AG04450 (cell line): ENCODE measurements at regions of chr9 and their contacts with region 1.

Region 1: DNA sequence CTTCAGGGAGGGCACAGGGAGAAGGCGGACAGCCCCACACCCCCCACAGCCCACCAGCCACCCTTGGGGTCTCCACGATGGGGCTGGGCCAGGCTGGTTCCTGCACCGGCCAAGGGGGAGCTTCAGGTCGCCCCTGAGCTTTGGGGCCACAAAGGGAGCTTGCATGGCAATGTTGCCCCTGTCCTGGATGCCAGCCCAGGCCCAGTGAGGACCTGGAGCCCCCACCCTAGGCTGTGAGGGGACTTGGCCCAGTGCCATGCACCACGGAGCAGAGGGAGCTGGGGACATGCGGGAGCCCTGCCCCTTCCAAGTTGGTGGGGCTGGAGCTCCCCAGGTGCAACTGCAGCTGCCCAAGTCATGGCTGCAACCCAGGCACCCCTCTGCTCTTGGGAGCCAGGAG is 18.4 kb downstream of the TMEM38B start:
- DNase-seq: no peak
- H3K4me3 ChIP-seq: no peak overlapping the region
- H3K27ac ChIP-seq: no peak overlapping the region
- H3K27me3 ChIP-seq: no peaks in the 10 kb centered on the region
- CTCF ChIP-seq: no peak

Region 2: DNA sequence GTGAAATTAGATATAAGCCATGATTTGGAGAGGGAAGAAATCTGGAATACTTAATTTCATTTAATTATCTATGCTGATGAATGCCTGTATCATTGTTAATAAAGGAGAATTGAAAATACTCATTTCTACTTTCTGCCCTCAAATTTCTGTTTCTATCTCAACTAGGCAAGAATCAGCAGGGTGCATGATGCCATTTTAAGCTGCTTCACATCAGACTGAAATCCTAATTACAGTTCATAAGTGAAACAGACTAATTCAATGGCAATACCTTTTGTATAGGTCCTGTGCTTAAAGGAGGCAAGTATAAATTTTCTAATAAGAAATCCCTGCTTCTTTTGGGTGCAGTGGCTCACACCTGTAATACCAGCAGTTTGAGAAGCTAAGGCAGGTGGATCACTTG is 72.8 kb before region 1 on chr9:
- CTCF ChIA-PET with region 1: interaction called, 12 read pairs
- POLR2A ChIA-PET with region 1: no interaction called
- DNase-seq: no peak
- H3K4me3 ChIP-seq: no peak overlapping the region
- H3K27ac ChIP-seq: no peak overlapping the region
- H3K27me3 ChIP-seq: no peaks in the 10 kb centered on the region
- CTCF ChIP-seq: no peak

Region 3: DNA sequence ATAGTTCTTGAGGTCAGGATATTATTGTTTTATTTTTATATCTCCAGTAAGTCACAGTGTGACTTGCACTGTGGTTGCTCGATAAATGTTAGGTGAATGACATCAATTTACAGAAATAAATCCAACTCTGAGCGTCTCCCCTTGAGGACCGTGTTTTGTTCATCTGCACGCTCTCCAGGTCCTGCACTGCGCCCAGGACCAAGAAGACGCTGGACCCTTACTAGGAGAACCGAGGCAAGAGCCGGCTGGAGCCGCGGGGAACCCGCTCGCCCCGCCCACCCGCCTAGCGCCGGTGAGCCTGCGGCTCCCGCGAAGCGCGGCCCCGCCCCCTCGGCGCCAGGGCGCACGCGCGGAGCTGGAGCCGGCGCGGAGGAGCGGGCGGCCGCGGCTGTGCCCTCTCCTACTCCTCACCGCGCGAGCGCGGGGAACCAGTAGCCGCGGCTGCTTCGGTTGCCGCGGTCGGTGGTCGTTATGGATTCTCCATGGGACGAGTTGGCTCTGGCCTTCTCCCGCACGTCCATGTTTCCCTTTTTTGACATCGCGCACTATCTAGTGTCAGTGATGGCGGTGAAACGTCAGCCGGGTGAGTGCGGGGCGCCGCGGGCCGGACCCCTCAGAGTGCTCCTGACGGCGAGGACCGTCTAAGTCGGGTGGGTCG is 18.5 kb before region 1 on chr9 and contains the start of gene TMEM38B:
- CTCF ChIA-PET with region 1: interaction called, 16 read pairs
- POLR2A ChIA-PET with region 1: no interaction called
- DNase-seq: no peak
- H3K4me3 ChIP-seq: peak within 1 kb of the TSS; percentile 78
- H3K27ac ChIP-seq: no peak within 1 kb of the TSS
- H3K27me3 ChIP-seq: peaks cover 8% of the 10 kb centered on the region
- CTCF ChIP-seq: no peak
- polyA plus RNA-seq, gene TMEM38B: 5.1 and 7.5 TPM in 2 replicates